ENCODE measurements at regions of chr20 and their contacts with region 1.

Region 1: GRCh38 chr20:49541733-49542513 is 26.0 kb downstream of the PTGIS start:
- DNase-seq: peak; percentile 79
- H3K4me3 Mint-ChIP-seq: no peak overlapping the region
- H3K27ac Mint-ChIP-seq: no peak overlapping the region
- H3K4me1 Mint-ChIP-seq: no peaks in the 10 kb centered on the region
- H3K27me3 Mint-ChIP-seq: peaks cover 10% of the 10 kb centered on the region

Region 2: DNA sequence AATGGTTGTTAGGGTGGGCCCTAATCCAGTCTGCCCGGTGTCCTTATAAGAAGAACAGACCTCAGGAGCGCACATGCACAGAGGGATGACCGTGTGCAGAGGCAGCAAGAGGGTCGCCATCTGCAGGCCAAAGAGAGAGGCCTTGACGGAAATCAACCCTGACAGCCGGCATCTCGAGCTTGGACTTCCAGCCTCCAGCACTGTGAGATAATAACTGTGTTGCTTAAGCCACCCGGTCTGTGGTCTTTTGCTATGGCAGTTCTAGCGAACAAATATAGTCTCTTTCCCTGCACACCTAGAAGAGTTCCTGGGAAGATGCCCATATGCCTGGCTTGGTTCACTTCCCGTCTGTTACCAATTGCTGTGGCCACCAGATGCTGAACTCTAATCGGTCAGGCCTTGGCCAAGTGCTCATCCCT is 61.3 kb after region 1 on chr20:
- CTCF ChIA-PET with region 1: interaction called, 166 read pairs
- intact Hi-C with region 1: no loop called
- DNase-seq: no peak
- H3K4me3 Mint-ChIP-seq: no peak overlapping the region
- H3K27ac Mint-ChIP-seq: no peak overlapping the region
- H3K4me1 Mint-ChIP-seq: peaks cover under 1% of the 10 kb centered on the region
- H3K27me3 Mint-ChIP-seq: peaks cover 2% of the 10 kb centered on the region

Region 3: DNA sequence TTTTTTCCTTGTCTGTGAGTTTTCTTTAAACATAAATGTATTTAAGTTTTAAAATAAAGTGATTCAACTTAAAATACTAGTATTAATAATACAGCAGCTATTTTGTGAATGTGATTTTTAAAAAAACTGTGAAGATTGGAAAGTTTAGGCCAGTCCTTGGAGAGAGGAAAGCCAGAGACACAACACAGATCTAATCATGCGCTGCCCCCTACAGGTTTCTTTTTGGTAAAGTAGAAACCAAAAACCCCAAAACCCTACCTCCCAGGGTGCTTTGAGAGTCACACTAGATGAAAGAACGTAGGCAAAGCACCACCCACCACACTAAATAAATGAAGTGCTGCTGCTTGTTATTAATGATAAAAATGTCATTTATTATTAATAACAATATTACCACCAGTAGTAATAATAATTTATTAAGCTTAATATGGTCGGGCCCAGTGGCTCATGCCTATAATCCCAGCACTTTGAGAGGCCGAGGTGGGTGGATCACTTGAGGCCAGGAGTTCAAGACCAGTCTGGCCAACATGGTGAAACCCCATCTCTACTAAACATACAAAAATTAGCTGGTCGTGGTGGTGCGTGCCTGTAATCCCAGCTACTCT is 304.4 kb after region 1 on chr20:
- CTCF ChIA-PET with region 1: interaction called, 4 read pairs
- intact Hi-C with region 1: loop called (anchors 2 kb)
- DNase-seq: peak; percentile 72
- H3K4me3 Mint-ChIP-seq: no peak overlapping the region
- H3K27ac Mint-ChIP-seq: no peak overlapping the region
- H3K4me1 Mint-ChIP-seq: peaks cover 3% of the 10 kb centered on the region
- H3K27me3 Mint-ChIP-seq: no peaks in the 10 kb centered on the region

Region 4: DNA sequence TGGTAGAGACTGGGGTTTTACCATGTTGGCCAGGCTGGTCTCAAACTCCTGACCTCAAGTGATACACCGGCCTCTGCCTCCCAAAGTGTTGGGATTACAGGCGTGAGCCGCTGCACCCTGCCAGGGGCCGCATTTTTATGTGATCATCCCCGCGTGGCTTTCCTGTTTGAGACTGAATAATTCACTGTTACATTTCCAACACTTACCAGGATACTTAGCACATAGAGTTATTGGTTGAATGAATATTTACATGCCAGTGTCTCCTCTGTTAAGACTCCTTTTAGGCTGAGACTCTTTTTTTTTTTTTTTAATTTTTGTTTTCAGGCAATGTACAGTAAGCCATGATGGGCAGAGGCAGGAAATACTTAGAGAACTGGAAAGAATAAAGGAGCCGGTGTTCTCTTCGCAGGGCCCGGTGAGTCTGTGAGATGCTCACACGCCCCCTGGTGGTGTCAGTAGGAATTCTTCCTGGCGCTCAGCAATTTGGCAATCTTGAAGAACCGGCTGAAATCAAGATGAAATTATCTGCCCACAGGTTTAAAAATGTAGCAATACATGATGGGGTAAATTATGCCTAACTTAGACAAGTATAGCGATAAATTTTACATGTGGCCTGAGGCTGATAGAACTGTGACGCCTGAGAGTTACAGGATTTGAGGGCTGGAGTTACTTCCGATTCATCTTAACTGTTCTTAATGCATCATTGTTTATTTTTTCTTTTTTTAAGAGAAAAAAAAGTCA is 386.6 kb after region 1 on chr20:
- CTCF ChIA-PET with region 1: no interaction called
- intact Hi-C with region 1: loop called (anchors 2 kb)
- DNase-seq: peak; percentile 90
- H3K4me3 Mint-ChIP-seq: no peak overlapping the region
- H3K27ac Mint-ChIP-seq: no peak overlapping the region
- H3K4me1 Mint-ChIP-seq: peaks cover 5% of the 10 kb centered on the region
- H3K27me3 Mint-ChIP-seq: no peaks in the 10 kb centered on the region

Measured in activated naive CD4-positive, alpha-beta T cell treated with anti-CD3 and anti-CD28 coated beads for 36 hours (primary cell).